Spleen (tissue), 13 donors: ENCODE measurements at regions of chr4 and their contacts with region 1.

Region 1: DNA sequence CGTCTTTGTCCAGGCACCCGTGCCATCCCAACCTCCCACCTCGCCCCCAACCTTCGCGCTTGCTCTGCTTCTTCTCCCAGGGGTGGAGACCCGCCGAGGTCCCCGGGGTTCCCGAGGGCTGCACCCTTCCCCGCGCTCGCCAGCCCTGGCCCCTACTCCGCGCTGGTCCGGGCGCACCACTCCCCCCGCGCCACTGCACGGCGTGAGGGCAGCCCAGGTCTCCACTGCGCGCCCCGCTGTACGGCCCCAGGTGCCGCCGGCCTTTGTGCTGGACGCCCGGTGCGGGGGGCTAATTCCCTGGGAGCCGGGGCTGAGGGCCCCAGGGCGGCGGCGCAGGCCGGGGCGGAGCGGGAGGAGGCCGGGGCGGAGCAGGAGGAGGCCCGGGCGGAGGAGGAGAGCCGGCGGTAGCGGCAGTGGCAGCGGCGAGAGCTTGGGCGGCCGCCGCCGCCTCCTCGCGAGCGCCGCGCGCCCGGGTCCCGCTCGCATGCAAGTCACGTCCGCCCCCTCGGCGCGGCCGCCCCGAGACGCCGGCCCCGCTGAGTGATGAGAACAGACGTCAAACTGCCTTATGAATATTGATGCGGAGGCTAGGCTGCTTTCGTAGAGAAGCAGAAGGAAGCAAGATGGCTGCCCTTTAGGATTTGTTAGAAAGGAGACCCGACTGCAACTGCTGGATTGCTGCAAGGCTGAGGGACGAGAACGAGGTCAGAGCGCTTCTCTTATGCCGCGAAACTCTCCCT is at the start of gene TET2:
- DNase-seq: peak; percentile 95
- H3K4me3 ChIP-seq: peak within 1 kb of the TSS; percentile 41 to 92 (median 74)
- H3K27ac ChIP-seq: peak within 1 kb of the TSS; percentile 62 to 99 (median 94)
- H3K4me1 ChIP-seq: peaks cover 13 to 53% (median 39%) of the 10 kb centered on the region in 6 donors
- H3K27me3 ChIP-seq: no peaks in the 10 kb centered on the region
- CTCF ChIP-seq: no peak
- POLR2A ChIP-seq: peak in 2 of 3 donors; percentile 43 to 49
- total RNA-seq, gene TET2: 40.4 to 70.4 (median 52.9) TPM

Region 2: DNA sequence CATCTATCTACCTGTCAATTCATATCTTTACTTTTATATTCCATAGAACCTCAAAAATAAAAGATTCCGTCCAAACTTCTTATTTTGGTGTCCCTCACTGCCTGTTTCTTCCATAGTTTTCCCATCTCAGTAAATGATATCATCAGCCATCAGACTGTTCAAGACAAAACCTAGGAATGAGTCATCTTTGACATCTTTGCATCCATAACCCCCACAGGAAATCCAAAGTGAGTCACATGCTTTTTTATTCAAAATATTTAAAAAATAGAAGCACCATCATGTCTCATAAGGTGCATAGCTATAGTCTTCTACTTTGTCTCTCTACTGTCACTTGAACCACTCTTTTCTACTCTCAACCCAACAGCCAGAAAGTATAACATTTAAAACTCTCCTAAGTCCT is 621.9 kb before region 1 on chr4:
- intact Hi-C with region 1: no loop called
- DNase-seq: no peak
- H3K4me3 ChIP-seq: no peak overlapping the region
- H3K27ac ChIP-seq: no peak overlapping the region
- H3K4me1 ChIP-seq: no peaks in the 10 kb centered on the region
- H3K27me3 ChIP-seq: no peaks in the 10 kb centered on the region
- CTCF ChIP-seq: no peak
- POLR2A ChIP-seq: no peak

Region 3: DNA sequence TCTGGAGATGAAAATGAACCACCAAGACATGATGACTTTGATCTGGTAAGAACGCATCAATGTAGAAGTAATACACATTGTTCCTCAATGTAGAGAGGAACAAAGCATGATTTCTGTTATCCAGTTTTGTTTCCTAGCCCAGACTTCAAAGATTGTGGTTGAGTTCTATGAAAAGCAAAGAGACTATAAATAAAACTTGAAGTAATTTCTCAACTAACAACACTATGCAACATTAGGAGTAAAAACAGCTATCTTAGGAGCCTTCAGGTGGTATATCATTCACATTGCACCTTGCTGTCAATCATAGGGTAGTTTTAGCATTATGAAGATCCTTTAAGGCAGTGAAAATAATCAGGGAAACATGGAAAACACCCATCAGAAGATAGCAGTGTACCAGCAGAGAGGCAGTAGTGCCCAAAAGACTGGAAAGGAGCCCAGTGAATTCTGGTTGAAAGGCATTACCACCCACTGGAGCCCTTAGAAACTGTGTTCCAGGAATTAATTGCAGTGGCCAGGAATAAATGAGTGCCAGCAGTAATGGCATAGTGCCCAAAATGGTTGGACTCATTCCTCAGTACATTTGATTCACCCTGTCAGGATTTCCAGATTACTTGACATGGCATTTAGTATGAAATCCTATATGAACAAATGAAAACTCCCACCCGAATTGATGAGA is 351.0 kb before region 1 on chr4:
- intact Hi-C with region 1: no loop called
- DNase-seq: no peak
- H3K4me3 ChIP-seq: no peak overlapping the region
- H3K27ac ChIP-seq: no peak overlapping the region
- H3K4me1 ChIP-seq: no peaks in the 10 kb centered on the region
- H3K27me3 ChIP-seq: peaks cover 0 to 3% (median 0%) of the 10 kb centered on the region in 7 donors
- CTCF ChIP-seq: no peak
- POLR2A ChIP-seq: no peak

Region 4: GRCh38 chr4:105708530-105709391 is 562.3 kb after region 1 on chr4 and contains the starts of genes GSTCD and INTS12:
- intact Hi-C with region 1: loop called (anchors 10 kb)
- DNase-seq: peak; percentile 96
- H3K4me3 ChIP-seq: peak within 1 kb of the TSS; percentile 59 to 94 (median 88)
- H3K27ac ChIP-seq: peak within 1 kb of the TSS; percentile 65 to 91 (median 86)
- H3K4me1 ChIP-seq: peaks cover 9 to 65% (median 26%) of the 10 kb centered on the region in 6 donors
- H3K27me3 ChIP-seq: no peaks in the 10 kb centered on the region
- CTCF ChIP-seq: peak in 2 of 11 experiments; percentile 12 to 14
- POLR2A ChIP-seq: peak; percentile 22 to 76 (median 51)
- total RNA-seq, gene GSTCD: 8.4 to 14.6 (median 9.8) TPM
- total RNA-seq, gene INTS12: 13.7 to 37.3 (median 20.9) TPM